A549 (cell line): ENCODE measurements at regions of chr17 and their contacts with region 1.

Region 1: DNA sequence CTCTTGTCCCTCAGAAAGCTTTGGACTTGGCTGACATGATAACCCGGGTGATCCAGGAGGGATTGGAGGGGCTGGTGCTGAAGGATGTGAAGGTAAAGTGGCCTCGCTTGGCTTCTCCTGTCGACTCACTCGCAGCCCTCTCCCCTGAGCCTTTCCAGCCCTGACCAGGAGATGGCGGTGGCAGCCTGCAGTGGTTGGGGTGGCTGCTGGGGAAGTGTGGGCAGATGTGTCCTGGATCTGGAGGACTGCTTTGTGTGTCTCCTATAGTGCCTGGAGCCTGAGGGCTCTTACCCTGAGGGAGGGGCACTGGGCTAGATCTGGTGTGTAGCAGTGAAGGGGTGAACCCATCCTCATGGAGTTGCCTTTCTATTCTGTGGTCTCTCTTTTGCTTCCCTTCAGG is 17.9 kb downstream of the LIG3 start:
- DNase-seq: peak; percentile 78 to 95
- ATAC-seq: peak; percentile 90
- H3K4me3 ChIP-seq: no peak overlapping the region
- H3K27ac ChIP-seq: peak overlapping the region; percentile 25 to 55; a peak in 4 of 6 replicates
- H3K4me1 ChIP-seq: peaks cover 3% of the 10 kb centered on the region; the same call in 1 of the 3 replicates
- CTCF ChIP-seq: peak; percentile 92
- EP300 ChIP-seq: no peak
- POLR2A ChIP-seq: no peak
- RAD21 ChIP-seq: peak; percentile 97 to 99

Region 2: GRCh38 chr17:33981711-33982601 is 1016.2 kb before region 1 on chr17:
- CTCF ChIA-PET with region 1: no interaction called
- POLR2A ChIA-PET with region 1: no interaction called
- DNase-seq: no peak
- ATAC-seq: no peak
- H3K4me3 ChIP-seq: no peak overlapping the region
- H3K27ac ChIP-seq: no peak overlapping the region
- H3K4me1 ChIP-seq: no peaks in the 10 kb centered on the region
- CTCF ChIP-seq: no peak
- EP300 ChIP-seq: no peak
- POLR2A ChIP-seq: no peak
- RAD21 ChIP-seq: no peak

Region 3: DNA sequence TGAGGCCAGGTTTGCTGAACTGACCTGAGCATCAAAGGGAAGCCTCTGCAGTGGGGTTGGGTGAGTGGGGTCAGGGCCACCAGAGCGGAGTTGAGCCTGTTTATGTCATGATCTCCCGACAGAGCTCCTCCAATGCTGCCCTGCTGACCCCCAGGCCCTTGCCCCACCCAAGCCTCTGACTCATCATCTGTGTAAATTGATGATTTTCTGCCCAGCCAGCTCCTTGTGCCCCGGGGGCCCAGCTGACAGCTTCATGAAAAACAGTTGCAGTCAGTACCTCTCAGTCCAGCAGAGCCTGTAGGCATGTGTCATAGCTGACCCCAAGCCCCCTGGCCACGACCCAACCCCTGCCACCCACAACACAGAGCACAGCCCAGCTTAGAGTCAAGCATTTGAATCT is 171.9 kb before region 1 on chr17:
- CTCF ChIA-PET with region 1: no interaction called
- POLR2A ChIA-PET with region 1: no interaction called
- DNase-seq: peak in 1 of 2 experiments; percentile 59
- ATAC-seq: peak; percentile 62 to 65; a peak in 5 of 6 replicates
- H3K4me3 ChIP-seq: no peak overlapping the region
- H3K27ac ChIP-seq: no peak overlapping the region; a peak in 1 of 6 replicates
- H3K4me1 ChIP-seq: peaks cover 16% of the 10 kb centered on the region
- CTCF ChIP-seq: no peak
- EP300 ChIP-seq: no peak
- POLR2A ChIP-seq: no peak
- RAD21 ChIP-seq: no peak

Region 4: DNA sequence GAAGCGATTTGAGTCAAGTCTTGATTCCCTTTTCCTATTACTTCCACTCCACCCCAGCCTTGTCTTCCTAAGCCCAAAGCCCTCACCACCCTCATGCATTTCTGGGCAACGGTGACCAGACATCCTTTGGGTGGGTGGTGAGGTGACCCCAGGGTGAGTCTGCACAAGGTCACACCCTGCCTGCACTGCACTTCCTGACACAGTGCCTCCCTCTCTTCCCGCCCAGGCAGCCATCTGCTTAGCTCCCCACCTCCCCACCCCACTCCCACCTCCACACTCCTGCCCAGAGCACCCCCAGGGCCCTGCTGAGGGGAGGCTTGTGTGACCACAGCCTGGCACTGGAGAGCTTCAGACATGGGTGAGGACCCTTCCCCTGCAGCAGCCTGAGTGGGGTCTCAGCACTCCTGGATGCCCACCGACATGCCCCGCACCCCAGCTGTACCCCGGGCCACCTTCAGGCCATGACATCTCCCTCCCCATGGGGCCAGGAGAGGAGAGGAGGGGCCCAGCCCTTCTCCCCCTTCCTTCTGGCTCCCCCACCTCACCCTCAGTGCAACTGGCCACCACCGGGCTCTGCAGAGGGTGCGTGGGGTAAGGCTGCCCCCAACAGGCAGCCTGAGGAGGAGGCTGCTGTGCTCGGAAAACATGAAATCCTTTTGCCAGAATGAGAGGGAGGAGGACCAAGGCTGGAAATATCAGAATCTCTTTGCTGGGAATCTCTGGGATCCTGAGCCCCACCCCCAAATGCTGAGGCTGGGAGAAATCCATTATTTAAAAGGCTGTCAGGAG is 105.5 kb before region 1 on chr17:
- CTCF ChIA-PET with region 1: no interaction called
- POLR2A ChIA-PET with region 1: no interaction called
- DNase-seq: peak; percentile 33 to 50
- ATAC-seq: peak; percentile 43 to 80; a peak in 4 of 6 replicates
- H3K4me3 ChIP-seq: no peak overlapping the region
- H3K27ac ChIP-seq: no peak overlapping the region
- H3K4me1 ChIP-seq: no peaks in the 10 kb centered on the region
- CTCF ChIP-seq: peak; percentile 46; the same call in 2 of the 3 replicates
- EP300 ChIP-seq: no peak
- POLR2A ChIP-seq: no peak
- RAD21 ChIP-seq: peak; percentile 66 to 83

Region 5: GRCh38 chr17:35011671-35012210 is 13.5 kb after region 1 on chr17:
- CTCF ChIA-PET with region 1: interaction called, 62 read pairs
- POLR2A ChIA-PET with region 1: no interaction called
- DNase-seq: no peak
- ATAC-seq: no peak
- H3K4me3 ChIP-seq: no peak overlapping the region
- H3K27ac ChIP-seq: no peak overlapping the region
- H3K4me1 ChIP-seq: no peaks in the 10 kb centered on the region
- CTCF ChIP-seq: no peak
- EP300 ChIP-seq: no peak
- POLR2A ChIP-seq: no peak
- RAD21 ChIP-seq: no peak

Region 6: DNA sequence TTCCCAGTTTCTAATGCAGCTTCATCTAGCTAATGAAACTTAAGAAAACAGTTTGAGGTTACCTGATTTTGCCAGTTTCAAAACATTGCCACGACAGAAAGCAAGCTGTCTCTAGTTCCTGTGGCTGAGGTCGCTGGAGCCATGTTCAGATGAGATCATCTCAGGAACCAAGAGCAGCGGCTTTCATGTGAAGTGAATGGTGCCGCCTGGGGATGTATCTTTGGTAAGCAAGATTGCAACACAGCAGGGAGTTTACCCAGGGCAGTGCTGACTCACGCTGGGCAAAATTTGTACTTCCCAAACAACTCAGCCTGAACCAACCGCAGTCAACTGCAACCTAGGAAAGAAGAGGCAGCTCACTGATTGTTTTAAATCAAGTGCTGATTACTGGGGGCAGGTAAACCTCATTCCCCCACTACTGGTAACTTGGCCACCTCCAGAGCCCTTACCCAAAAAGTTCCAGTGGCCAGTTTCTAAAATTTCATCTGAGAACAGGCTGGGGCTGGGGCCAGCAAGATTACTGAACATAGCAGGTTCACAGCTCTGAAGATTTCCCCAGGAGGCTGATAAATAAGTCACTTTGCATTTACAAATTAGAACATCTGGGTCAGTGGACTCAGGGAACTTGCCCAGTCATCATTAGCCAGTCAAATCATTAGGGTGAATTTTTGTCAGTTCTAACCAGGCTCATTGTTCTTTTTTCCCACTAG is 65.5 kb after region 1 on chr17 and contains the start of gene RFFL:
- CTCF ChIA-PET with region 1: interaction called, 38 read pairs
- POLR2A ChIA-PET with region 1: interaction called, 4 read pairs
- DNase-seq: peak; percentile 99
- ATAC-seq: peak; percentile 97 to 100
- H3K4me3 ChIP-seq: peak within 1 kb of the TSS; percentile 38
- H3K27ac ChIP-seq: peak within 1 kb of the TSS; percentile 92 to 93
- H3K4me1 ChIP-seq: peaks cover 59% of the 10 kb centered on the region
- CTCF ChIP-seq: no peak
- EP300 ChIP-seq: peak; percentile 61 to 86; a peak in 3 of 5 replicates
- POLR2A ChIP-seq: peak; percentile 31
- RAD21 ChIP-seq: peak; percentile 56 to 67
- polyA plus RNA-seq, gene RFFL: 35.5 and 49.4 TPM in 2 replicates

Region 7: GRCh38 chr17:35088881-35089585 is 90.8 kb after region 1 on chr17:
- CTCF ChIA-PET with region 1: interaction called, 46 read pairs
- POLR2A ChIA-PET with region 1: no interaction called
- DNase-seq: peak in 1 of 2 experiments; percentile 86
- ATAC-seq: peak; percentile 70 to 87
- H3K4me3 ChIP-seq: peak overlapping the region; percentile 90
- H3K27ac ChIP-seq: peak overlapping the region; percentile 96
- H3K4me1 ChIP-seq: peaks cover 42% of the 10 kb centered on the region
- CTCF ChIP-seq: peak; percentile 98
- EP300 ChIP-seq: no peak
- POLR2A ChIP-seq: no peak
- RAD21 ChIP-seq: peak; percentile 59 to 82

Region 8: DNA sequence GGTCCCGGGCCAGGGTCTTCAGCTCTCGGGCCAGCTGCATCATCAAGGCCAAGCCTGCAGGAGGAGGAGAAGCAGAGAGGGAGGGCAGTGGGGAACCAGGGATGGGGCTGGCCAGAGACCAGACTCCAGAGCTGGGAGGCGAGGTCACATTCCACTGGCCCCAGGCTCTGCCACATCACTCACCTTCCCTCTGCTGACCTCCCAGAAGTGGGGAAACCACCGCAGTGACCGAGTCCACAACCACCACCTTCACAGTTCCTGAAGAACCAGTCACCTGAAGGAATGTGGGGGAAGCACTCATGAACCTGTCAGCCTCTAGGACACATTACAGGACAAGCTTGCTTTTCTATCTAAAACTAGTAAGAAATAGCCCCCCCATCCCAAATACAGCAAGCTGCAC is 105.1 kb after region 1 on chr17:
- CTCF ChIA-PET with region 1: interaction called, 32 read pairs
- POLR2A ChIA-PET with region 1: no interaction called
- DNase-seq: no peak
- ATAC-seq: no peak
- H3K4me3 ChIP-seq: no peak overlapping the region
- H3K27ac ChIP-seq: no peak overlapping the region
- H3K4me1 ChIP-seq: no peaks in the 10 kb centered on the region
- CTCF ChIP-seq: no peak
- EP300 ChIP-seq: no peak
- POLR2A ChIP-seq: no peak
- RAD21 ChIP-seq: no peak

Region 9: GRCh38 chr17:35154196-35155165 is 156.3 kb after region 1 on chr17:
- CTCF ChIA-PET with region 1: no interaction called
- POLR2A ChIA-PET with region 1: no interaction called
- DNase-seq: no peak
- ATAC-seq: no peak; a peak in 1 of 6 replicates
- H3K4me3 ChIP-seq: no peak overlapping the region
- H3K27ac ChIP-seq: no peak overlapping the region
- H3K4me1 ChIP-seq: no peaks in the 10 kb centered on the region
- CTCF ChIP-seq: no peak
- EP300 ChIP-seq: no peak
- POLR2A ChIP-seq: no peak
- RAD21 ChIP-seq: no peak